H1 (cell line): ENCODE measurements at regions of chr15 and their contacts with region 1.

Region 1: GRCh38 chr15:84035399-84035766 is 200.2 kb upstream of the GOLGA6L4 start:
- DNase-seq: no peak
- H3K4me3 ChIP-seq: no peak overlapping the region
- H3K27ac ChIP-seq: no peak overlapping the region
- H3K4me1 ChIP-seq: no peaks in the 10 kb centered on the region
- H3K27me3 ChIP-seq: no peaks in the 10 kb centered on the region; a peak in 1 of 7 replicates
- CTCF ChIP-seq: peak in 2 of 3 experiments; percentile 29 to 67; a peak in 2 of 4 replicates
- EP300 ChIP-seq: no peak
- POLR2A ChIP-seq: no peak
- RAD21 ChIP-seq: peak; percentile 57 to 59

Region 2: DNA sequence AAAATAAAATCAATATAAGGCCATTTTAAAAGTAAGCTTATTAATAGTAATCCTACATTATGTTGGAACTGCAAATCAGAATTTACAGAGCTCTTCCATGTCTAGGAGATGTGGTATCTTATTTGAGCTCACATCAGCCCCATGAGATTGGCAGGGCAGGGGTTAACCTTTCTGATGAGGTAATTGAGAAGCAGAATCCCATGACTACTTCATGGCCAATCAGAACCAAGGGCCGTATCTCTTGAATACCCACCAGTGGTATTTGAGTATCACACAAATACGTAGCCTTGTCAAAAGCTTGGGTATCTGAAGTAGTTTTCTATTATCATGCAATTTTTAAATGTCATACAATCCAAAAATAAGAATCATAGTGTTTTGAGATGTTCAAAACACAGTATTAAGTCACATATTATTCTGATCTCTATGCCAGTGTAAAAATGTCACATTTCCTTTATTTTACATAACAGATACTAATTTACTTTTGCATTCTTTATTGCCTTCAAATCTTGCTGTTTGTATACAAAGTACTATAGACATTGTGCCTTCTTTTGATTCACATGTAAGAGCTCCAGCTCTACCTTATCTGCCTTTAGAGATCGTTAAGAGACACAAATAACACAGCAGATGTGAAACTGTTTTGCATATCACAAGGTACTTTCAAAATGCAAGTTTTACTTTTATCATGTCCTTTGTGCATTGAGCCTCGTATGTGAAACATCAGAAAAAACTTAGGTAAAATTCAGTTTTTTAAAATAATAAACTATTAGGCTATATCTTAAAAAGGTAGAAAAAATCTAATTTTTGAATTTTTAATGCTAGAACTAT is 51.5 kb before region 1 on chr15:
- CTCF ChIA-PET with region 1: interaction called, 10 read pairs
- POLR2A ChIA-PET with region 1: no interaction called
- DNase-seq: no peak
- H3K4me3 ChIP-seq: no peak overlapping the region
- H3K27ac ChIP-seq: no peak overlapping the region
- H3K4me1 ChIP-seq: no peaks in the 10 kb centered on the region
- H3K27me3 ChIP-seq: no peaks in the 10 kb centered on the region
- CTCF ChIP-seq: no peak
- EP300 ChIP-seq: no peak
- POLR2A ChIP-seq: no peak
- RAD21 ChIP-seq: no peak

Region 3: DNA sequence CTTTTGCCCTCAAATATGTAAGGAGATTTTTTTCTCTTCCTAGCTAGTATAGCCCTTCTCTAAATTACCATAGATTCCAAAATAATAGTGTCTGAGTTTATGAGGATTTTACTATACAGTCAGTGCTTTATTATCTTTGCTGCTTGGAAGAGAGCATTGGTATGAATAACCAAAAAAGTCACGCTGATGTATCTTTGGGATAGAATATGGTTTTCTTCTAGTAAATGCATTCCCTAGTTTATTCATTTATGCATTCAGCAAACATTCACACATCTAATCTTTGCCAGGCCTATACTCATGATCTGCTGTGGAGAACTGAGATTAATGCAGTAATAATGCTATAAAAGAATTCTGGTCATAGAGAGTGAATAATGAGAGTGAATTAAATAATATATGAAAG is 25.1 kb before region 1 on chr15:
- CTCF ChIA-PET with region 1: interaction called, 19 read pairs
- POLR2A ChIA-PET with region 1: no interaction called
- DNase-seq: no peak
- H3K4me3 ChIP-seq: no peak overlapping the region
- H3K27ac ChIP-seq: no peak overlapping the region
- H3K4me1 ChIP-seq: no peaks in the 10 kb centered on the region
- H3K27me3 ChIP-seq: no peaks in the 10 kb centered on the region
- CTCF ChIP-seq: no peak
- EP300 ChIP-seq: no peak
- POLR2A ChIP-seq: no peak
- RAD21 ChIP-seq: no peak

Region 4: GRCh38 chr15:84016371-84016770 is 19.0 kb before region 1 on chr15:
- CTCF ChIA-PET with region 1: interaction called, 19 read pairs
- POLR2A ChIA-PET with region 1: no interaction called
- DNase-seq: no peak
- H3K4me3 ChIP-seq: no peak overlapping the region
- H3K27ac ChIP-seq: no peak overlapping the region
- H3K4me1 ChIP-seq: no peaks in the 10 kb centered on the region
- H3K27me3 ChIP-seq: no peaks in the 10 kb centered on the region
- CTCF ChIP-seq: no peak
- EP300 ChIP-seq: no peak
- POLR2A ChIP-seq: no peak
- RAD21 ChIP-seq: no peak

Region 5: GRCh38 chr15:84023636-84024035 is 11.7 kb before region 1 on chr15:
- CTCF ChIA-PET with region 1: interaction called, 52 read pairs
- POLR2A ChIA-PET with region 1: no interaction called
- DNase-seq: peak in 1 of 2 experiments; percentile 48
- H3K4me3 ChIP-seq: no peak overlapping the region
- H3K27ac ChIP-seq: no peak overlapping the region
- H3K4me1 ChIP-seq: no peaks in the 10 kb centered on the region
- H3K27me3 ChIP-seq: no peaks in the 10 kb centered on the region
- CTCF ChIP-seq: peak in 2 of 3 experiments; percentile 54 to 67; a peak in 3 of 4 replicates
- EP300 ChIP-seq: no peak
- POLR2A ChIP-seq: no peak
- RAD21 ChIP-seq: peak; percentile 54 to 56